PC-3 (cell line): ENCODE measurements at regions of chr2 and their contacts with region 1.

Region 1: DNA sequence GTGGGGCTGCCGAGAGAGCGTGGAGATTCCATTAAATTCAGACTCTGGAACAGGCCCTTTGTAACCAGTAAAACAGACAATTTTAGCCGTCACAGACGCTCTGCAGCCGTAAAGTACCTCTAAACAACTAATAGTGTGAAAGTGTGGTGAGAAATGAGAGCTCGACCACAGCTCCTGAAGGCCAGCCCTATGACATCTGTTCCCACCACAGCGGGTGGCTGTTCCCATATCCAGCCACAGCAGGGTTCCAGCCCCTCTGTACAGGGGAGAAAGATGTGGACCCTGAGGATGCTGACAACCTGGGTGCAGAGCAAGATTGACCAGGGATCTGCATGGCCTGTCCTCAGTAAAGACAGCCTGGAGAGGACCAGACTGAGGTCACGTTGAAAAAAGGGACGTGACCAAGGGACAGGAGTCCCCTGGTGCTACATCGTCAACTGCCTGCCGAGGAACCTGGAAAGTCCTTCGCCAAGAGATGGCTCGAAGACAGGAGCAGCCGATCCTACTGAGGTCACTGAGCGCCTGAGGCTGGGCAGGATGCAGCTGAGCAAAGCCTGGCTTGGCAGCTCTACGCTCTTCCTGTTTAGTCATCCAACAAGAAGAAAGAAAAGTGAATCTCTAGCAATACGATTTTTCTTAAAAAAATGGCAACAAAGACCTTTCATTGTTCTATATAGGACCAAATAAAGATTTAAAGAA is 831.7 kb downstream of the RNF144A start:
- DNase-seq: peak; percentile 95
- ATAC-seq: peak; percentile 84
- H3K4me3 ChIP-seq: no peak overlapping the region
- H3K27ac ChIP-seq: peak overlapping the region; percentile 81
- H3K4me1 ChIP-seq: peaks cover 42% of the 10 kb centered on the region
- H3K27me3 ChIP-seq: no peaks in the 10 kb centered on the region
- CTCF ChIP-seq: no peak

Region 2: GRCh38 chr2:7692657-7693161 is 56.2 kb before region 1 on chr2:
- CTCF ChIA-PET with region 1: no interaction called
- POLR2A ChIA-PET with region 1: interaction called, 11 read pairs
- intact Hi-C with region 1: no loop called
- DNase-seq: peak; percentile 60
- ATAC-seq: no peak
- H3K4me3 ChIP-seq: no peak overlapping the region
- H3K27ac ChIP-seq: peak overlapping the region; percentile 46
- H3K4me1 ChIP-seq: peaks cover 24% of the 10 kb centered on the region
- H3K27me3 ChIP-seq: no peaks in the 10 kb centered on the region
- CTCF ChIP-seq: no peak

Region 3: GRCh38 chr2:7736646-7737305 is 12.1 kb before region 1 on chr2:
- CTCF ChIA-PET with region 1: no interaction called
- POLR2A ChIA-PET with region 1: no interaction called
- intact Hi-C with region 1: no loop called
- DNase-seq: peak; percentile 30
- ATAC-seq: no peak
- H3K4me3 ChIP-seq: no peak overlapping the region
- H3K27ac ChIP-seq: no peak overlapping the region
- H3K4me1 ChIP-seq: peaks cover 7% of the 10 kb centered on the region; the same call in 1 of the 2 replicates
- H3K27me3 ChIP-seq: no peaks in the 10 kb centered on the region
- CTCF ChIP-seq: no peak

Region 4: DNA sequence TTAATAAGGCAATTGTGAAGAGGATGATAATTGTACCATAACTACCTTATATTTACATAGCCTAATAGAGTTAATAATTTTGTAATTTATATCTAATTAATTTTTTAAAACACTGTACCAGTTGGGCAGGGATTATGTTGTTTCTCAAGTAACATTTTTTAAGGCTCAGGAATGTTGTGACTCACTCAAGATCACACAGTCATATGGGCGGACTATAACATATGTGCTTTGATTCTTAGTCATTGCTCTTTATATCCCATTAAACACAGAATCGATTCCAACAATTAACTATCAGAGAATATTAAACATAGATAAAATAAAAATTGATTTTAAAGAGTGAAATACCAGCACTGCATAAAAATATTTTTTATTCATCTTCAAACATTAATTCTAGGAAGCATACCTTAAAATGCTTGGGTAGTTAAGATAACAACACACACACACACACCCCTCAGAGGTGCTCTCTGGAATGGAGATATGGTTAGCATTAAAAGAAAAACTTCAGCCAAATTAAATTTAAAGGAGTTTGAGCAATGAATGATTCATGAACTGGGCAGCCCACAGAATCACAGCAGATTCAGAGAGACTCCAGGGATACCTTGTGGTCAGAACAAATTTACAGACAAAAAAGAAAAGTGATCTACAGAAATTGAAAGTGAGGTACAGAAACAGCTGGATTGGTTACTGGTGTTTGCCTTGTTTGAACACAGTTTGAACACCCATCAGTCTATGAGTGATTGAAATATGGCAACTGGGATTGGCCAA is 63.5 kb after region 1 on chr2:
- CTCF ChIA-PET with region 1: no interaction called
- POLR2A ChIA-PET with region 1: no interaction called
- intact Hi-C with region 1: loop called (anchors 5 kb)
- DNase-seq: peak; percentile 88
- ATAC-seq: peak; percentile 91
- H3K4me3 ChIP-seq: peak overlapping the region; percentile 3; the same call in 1 of the 2 replicates
- H3K27ac ChIP-seq: peak overlapping the region; percentile 94
- H3K4me1 ChIP-seq: peaks cover 35% of the 10 kb centered on the region
- H3K27me3 ChIP-seq: no peaks in the 10 kb centered on the region
- CTCF ChIP-seq: no peak

Region 5: DNA sequence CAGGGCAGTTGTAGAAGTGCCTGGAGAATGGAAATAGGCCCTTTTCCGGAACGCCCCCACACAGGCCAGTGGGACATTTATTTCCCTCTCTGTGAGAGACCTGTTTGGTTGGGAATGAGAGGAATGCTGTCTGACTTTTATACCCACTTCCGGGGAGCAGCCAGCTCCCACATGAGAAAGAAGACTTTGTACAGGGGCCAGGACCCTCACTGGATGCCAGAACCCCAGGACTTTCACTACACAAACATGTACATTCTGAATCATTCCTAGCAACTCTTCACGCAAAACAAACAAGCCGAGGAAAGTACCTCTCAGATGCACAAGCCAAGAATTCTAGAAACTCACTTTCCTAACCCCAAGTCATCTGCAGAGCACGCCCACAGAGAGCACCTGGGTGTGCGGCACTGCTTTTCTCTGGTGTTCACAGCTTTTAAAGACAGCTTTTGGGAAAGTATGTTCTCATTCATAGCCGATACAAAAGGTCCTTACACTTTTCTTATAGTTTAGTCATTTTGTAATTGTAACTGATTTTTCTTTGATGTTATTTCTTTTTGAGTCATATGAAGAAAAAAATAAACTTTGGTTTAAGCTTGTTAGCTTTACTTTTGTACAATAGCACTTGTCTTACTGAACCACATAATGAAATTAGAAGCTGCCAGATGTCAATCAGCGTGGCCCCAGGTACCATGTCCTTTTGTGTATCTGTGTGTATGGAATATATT is 76.9 kb after region 1 on chr2:
- CTCF ChIA-PET with region 1: no interaction called
- POLR2A ChIA-PET with region 1: no interaction called
- intact Hi-C with region 1: loop called (anchors 5 kb)
- DNase-seq: peak; percentile 96
- ATAC-seq: peak; percentile 94
- H3K4me3 ChIP-seq: peak overlapping the region; percentile 31
- H3K27ac ChIP-seq: peak overlapping the region; percentile 90
- H3K4me1 ChIP-seq: peaks cover 21% of the 10 kb centered on the region
- H3K27me3 ChIP-seq: no peaks in the 10 kb centered on the region
- CTCF ChIP-seq: no peak